ENCODE measurements at regions of chr12 and their contacts with region 1.

Region 1: GRCh38 chr12:6278439-6279255 is 31.8 kb upstream of the PLEKHG6 start:
- DNase-seq: peak; percentile 72 to 93 (median 86)
- ATAC-seq: peak; percentile 100
- H3K4me3 ChIP-seq: peak overlapping the region; percentile 7 to 50
- H3K4me3 Mint-ChIP-seq: peak overlapping the region; percentile 72
- H3K27ac ChIP-seq: no peak overlapping the region
- H3K27ac Mint-ChIP-seq: no peak overlapping the region
- H3K4me1 ChIP-seq: peaks cover 6% of the 10 kb centered on the region
- H3K4me1 Mint-ChIP-seq: peaks cover 5% of the 10 kb centered on the region
- H3K27me3 ChIP-seq: peaks cover 0 to 6% of the 10 kb centered on the region in 2 experiments
- H3K27me3 Mint-ChIP-seq: peaks cover 27% of the 10 kb centered on the region
- CTCF ChIP-seq: peak; percentile 93

Region 2: GRCh38 chr12:6056406-6057240 is 222.0 kb before region 1 on chr12:
- CTCF ChIA-PET with region 1: interaction called, 61 read pairs
- POLR2A ChIA-PET with region 1: interaction called, 4 read pairs
- intact Hi-C with region 1: loop called in 1 of 2 experiments (anchors 1 kb)
- DNase-seq: peak in 8 of 9 experiments; percentile 20 to 78 (median 58)
- ATAC-seq: peak; percentile 94
- H3K4me3 ChIP-seq: peak overlapping the region; percentile 35 to 54
- H3K4me3 Mint-ChIP-seq: peak overlapping the region; percentile 79
- H3K27ac ChIP-seq: peak overlapping the region in 1 of 2 experiments; percentile 31
- H3K27ac Mint-ChIP-seq: peak overlapping the region; percentile 91
- H3K4me1 ChIP-seq: peaks cover 8% of the 10 kb centered on the region
- H3K4me1 Mint-ChIP-seq: peaks cover 12% of the 10 kb centered on the region
- H3K27me3 ChIP-seq: no peaks in the 10 kb centered on the region
- H3K27me3 Mint-ChIP-seq: no peaks in the 10 kb centered on the region
- CTCF ChIP-seq: peak; percentile 33

Region 3: DNA sequence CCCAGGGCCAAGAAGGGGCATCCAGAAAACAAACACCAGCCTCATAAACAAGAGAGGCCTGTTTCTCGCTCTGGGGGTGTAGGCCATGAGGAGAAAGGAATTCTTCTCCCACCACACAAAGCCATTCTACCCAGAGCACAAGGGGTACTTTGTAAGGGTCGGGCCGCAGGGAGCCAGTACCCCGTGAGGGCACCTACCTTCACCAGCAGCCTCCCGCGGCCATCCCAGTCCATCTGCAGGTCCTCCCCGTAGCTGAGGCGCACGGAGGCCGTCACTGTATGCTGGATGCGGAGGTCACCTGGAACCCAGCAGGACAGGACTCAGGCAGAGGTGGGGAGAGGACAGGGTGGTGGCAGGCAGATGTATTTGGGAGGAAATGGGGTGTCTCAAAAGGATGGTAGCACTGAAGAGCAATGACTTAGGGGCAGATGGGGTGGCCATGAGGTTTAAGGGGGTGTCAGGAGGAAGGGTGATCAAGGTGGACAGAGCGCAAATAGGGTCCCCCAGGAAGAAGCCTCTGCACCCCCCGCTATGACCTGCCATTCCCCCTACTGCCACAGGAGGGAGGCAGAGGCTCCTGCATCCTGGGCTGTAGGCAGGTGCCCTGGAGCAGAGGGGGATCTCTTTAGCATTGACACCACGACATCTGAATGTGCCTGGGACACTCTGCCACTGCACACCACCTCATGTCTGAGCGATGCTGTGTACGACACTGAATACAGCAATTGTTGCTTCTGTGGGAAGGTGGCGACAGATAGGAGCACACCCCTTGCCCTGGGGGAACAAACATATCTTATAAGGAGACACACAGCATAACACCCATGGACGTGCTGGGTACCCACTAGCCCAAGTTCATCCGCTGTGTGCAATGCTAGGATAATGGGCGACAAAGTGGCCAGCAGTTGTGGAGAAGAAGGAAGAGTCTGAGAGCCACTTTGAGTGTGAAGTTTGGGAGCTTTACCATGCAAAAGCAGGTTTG is 215.6 kb before region 1 on chr12:
- CTCF ChIA-PET with region 1: interaction called, 61 read pairs
- POLR2A ChIA-PET with region 1: no interaction called
- intact Hi-C with region 1: loop called (anchors 1 kb)
- DNase-seq: peak; percentile 39 to 81 (median 64)
- ATAC-seq: peak; percentile 99
- H3K4me3 ChIP-seq: no peak overlapping the region
- H3K4me3 Mint-ChIP-seq: no peak overlapping the region
- H3K27ac ChIP-seq: no peak overlapping the region
- H3K27ac Mint-ChIP-seq: no peak overlapping the region
- H3K4me1 ChIP-seq: no peaks in the 10 kb centered on the region
- H3K4me1 Mint-ChIP-seq: peaks cover 3% of the 10 kb centered on the region
- H3K27me3 ChIP-seq: no peaks in the 10 kb centered on the region
- H3K27me3 Mint-ChIP-seq: peaks cover 3% of the 10 kb centered on the region
- CTCF ChIP-seq: peak; percentile 84

Region 4: DNA sequence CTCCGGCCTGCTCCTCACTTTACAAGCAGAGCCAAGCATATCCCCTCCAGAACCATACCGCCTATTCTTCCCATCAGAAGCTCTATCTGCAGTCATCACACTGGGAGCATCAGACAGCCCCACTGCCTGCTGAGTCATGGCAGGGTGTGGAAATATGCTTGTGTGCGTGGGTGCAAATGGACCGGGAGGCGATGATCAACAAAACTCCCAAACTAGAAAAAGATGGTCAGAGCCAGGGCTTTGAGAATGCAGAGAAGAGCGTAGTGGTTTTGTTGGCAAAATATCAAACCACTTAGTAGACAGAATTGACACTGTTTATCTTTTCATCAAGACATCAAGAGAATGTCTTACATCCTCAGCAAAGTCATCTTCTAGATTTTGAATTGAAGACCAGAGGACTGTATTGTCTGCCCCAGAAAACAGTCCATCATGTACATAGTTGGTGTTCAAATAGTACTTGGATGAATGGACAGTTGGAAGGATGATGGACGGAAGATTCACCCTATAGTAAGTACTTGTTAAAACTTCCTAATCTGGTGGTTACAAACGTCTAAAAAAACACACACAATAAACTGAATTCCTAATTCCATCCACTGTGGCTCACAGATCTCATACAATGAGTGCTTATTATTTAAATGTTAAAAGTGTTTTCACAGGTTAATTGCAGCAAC is 209.1 kb before region 1 on chr12:
- CTCF ChIA-PET with region 1: interaction called, 52 read pairs
- POLR2A ChIA-PET with region 1: no interaction called
- intact Hi-C with region 1: no loop called
- DNase-seq: peak in 3 of 9 experiments; percentile 14 to 55 (median 39)
- ATAC-seq: peak; percentile 59
- H3K4me3 ChIP-seq: no peak overlapping the region
- H3K4me3 Mint-ChIP-seq: peak overlapping the region; percentile 33
- H3K27ac ChIP-seq: no peak overlapping the region
- H3K27ac Mint-ChIP-seq: no peak overlapping the region
- H3K4me1 ChIP-seq: peaks cover 10% of the 10 kb centered on the region
- H3K4me1 Mint-ChIP-seq: peaks cover 22% of the 10 kb centered on the region
- H3K27me3 ChIP-seq: no peaks in the 10 kb centered on the region
- H3K27me3 Mint-ChIP-seq: no peaks in the 10 kb centered on the region
- CTCF ChIP-seq: no peak

Region 5: GRCh38 chr12:6230321-6231110 is 48.1 kb before region 1 on chr12:
- CTCF ChIA-PET with region 1: interaction called, 17 read pairs
- POLR2A ChIA-PET with region 1: no interaction called
- intact Hi-C with region 1: loop called in 1 of 2 experiments (anchors 5 kb)
- DNase-seq: peak; percentile 53 to 91 (median 79)
- ATAC-seq: peak; percentile 96
- H3K4me3 ChIP-seq: no peak overlapping the region
- H3K4me3 Mint-ChIP-seq: peak overlapping the region; percentile 38
- H3K27ac ChIP-seq: peak overlapping the region; percentile 3 to 55
- H3K27ac Mint-ChIP-seq: peak overlapping the region; percentile 90
- H3K4me1 ChIP-seq: peaks cover 33% of the 10 kb centered on the region
- H3K4me1 Mint-ChIP-seq: peaks cover 34% of the 10 kb centered on the region
- H3K27me3 ChIP-seq: no peaks in the 10 kb centered on the region
- H3K27me3 Mint-ChIP-seq: no peaks in the 10 kb centered on the region
- CTCF ChIP-seq: no peak

Region 6: DNA sequence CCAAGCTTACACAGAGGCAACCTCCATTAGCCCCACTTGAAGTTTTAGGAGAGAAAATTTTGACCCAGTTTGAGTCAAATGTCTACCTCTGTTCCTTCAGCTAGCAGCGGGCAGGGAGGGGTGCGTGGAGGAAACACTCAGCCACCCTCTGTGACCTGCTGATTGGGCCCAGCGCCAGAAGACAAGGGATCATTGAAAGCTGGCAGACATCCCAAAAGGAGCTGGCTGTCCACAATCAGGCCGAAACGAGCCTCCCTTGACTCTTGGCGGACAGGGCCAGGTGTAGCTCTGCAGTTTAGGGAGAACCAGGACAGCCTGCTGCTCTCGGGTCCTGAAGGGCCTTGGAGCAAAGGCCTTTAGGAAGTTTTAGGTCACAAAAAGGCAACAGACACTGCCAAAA is 37.2 kb before region 1 on chr12:
- CTCF ChIA-PET with region 1: no interaction called
- POLR2A ChIA-PET with region 1: no interaction called
- intact Hi-C with region 1: no loop called
- DNase-seq: no peak
- ATAC-seq: no peak
- H3K4me3 ChIP-seq: no peak overlapping the region
- H3K4me3 Mint-ChIP-seq: no peak overlapping the region
- H3K27ac ChIP-seq: no peak overlapping the region
- H3K27ac Mint-ChIP-seq: no peak overlapping the region
- H3K4me1 ChIP-seq: no peaks in the 10 kb centered on the region
- H3K4me1 Mint-ChIP-seq: no peaks in the 10 kb centered on the region
- H3K27me3 ChIP-seq: no peaks in the 10 kb centered on the region
- H3K27me3 Mint-ChIP-seq: no peaks in the 10 kb centered on the region
- CTCF ChIP-seq: no peak